H1 (cell line): ENCODE measurements at regions of chr11 and their contacts with region 1.

Region 1: GRCh38 chr11:121464352-121464946 is 11.7 kb upstream of the SORL1-AS1 start:
- DNase-seq: no peak
- H3K4me3 ChIP-seq: no peak overlapping the region
- H3K27ac ChIP-seq: 0 out of 2 replicates have a peak overlapping the region, but pooled peaks have one; percentile 1
- H3K4me1 ChIP-seq: peaks cover 21 to 37% (median 28%) of the 10 kb centered on the region in 4 experiments
- H3K27me3 ChIP-seq: no peaks in the 10 kb centered on the region
- CTCF ChIP-seq: no peak
- EP300 ChIP-seq: no peak
- POLR2A ChIP-seq: no peak
- RAD21 ChIP-seq: no peak

Region 2: GRCh38 chr11:121451986-121452608 is 12.4 kb before region 1 on chr11 and contains the start of gene SORL1:
- CTCF ChIA-PET with region 1: interaction called, 11 read pairs
- POLR2A ChIA-PET with region 1: interaction called, 16 read pairs
- DNase-seq: peak; percentile 44 to 90
- H3K4me3 ChIP-seq: peak within 1 kb of the TSS; percentile 78 to 97 (median 90)
- H3K27ac ChIP-seq: peak within 1 kb of the TSS; percentile 81
- H3K4me1 ChIP-seq: peaks cover 9 to 24% (median 10%) of the 10 kb centered on the region in 4 experiments
- H3K27me3 ChIP-seq: peaks cover 0 to 3% (median 1%) of the 10 kb centered on the region in 4 experiments; a peak in 4 of 7 replicates
- CTCF ChIP-seq: peak; percentile 74 to 94 (median 76)
- EP300 ChIP-seq: 0 out of 3 replicates have a peak, but pooled peaks of 1 of the 2 experiments have one; percentile 33
- POLR2A ChIP-seq: peak in 1 of 2 experiments; percentile 74; a peak in 2 of 3 replicates
- RAD21 ChIP-seq: peak; percentile 37 to 70; a peak in 3 of 4 replicates
- total RNA-seq, gene SORL1: 65.5 and 66.6 TPM in 2 replicates

Region 3: GRCh38 chr11:121479698-121480238 is 15.3 kb after region 1 on chr11:
- CTCF ChIA-PET with region 1: interaction called, 11 read pairs
- POLR2A ChIA-PET with region 1: interaction called, 3 read pairs
- DNase-seq: no peak
- H3K4me3 ChIP-seq: peak overlapping the region in 1 of 4 experiments; percentile 43; a peak in 2 of 8 replicates
- H3K27ac ChIP-seq: no peak overlapping the region; the same call in 1 of the 2 replicates
- H3K4me1 ChIP-seq: peaks cover 16 to 34% (median 27%) of the 10 kb centered on the region in 4 experiments
- H3K27me3 ChIP-seq: no peaks in the 10 kb centered on the region
- CTCF ChIP-seq: no peak
- EP300 ChIP-seq: no peak
- POLR2A ChIP-seq: no peak
- RAD21 ChIP-seq: 0 out of 4 replicates have a peak, but pooled peaks of 1 of the 2 experiments have one; percentile 15

Region 4: DNA sequence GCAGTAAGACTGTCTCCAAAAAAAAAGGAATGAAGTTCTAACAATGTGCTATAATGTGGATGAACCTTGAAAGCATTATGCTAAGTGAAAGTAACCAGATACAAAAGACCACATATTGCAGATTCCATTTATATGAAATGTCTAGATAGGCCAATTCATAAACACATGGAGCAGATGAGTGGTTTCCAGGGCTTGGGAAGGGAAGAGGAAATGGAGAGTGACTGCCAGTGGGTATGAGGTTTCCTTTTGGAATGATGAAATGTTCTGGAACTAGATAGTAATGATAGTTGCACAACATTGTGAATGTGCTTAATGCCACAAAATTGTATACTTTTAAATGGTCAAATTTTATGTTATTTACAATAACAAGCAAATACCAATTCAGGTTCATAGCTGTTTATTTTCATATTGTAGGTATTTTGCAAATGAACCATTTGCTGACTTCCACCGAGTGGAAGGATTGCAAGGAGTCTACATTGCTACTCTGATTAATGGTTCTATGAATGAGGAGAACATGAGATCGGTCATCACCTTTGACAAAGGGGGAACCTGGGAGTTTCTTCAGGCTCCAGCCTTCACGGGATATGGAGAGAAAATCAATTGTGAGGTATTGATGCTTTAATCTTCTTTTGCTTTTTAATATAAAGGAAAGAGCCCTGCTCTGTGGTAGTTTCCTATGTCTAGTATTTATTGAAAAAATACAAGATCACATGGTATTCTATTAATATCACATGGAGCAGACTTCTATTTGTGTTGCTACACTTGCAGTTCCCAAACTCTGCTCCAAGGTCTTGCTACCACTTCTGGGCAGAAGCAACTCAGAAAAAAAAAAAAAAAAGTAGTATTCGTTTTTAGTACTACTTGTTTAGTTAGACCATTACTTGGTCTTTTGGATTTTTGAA is 56.0 kb after region 1 on chr11:
- CTCF ChIA-PET with region 1: no interaction called
- POLR2A ChIA-PET with region 1: no interaction called
- DNase-seq: no peak
- H3K4me3 ChIP-seq: no peak overlapping the region
- H3K27ac ChIP-seq: no peak overlapping the region
- H3K4me1 ChIP-seq: no peaks in the 10 kb centered on the region; a peak in 1 of 7 replicates
- H3K27me3 ChIP-seq: no peaks in the 10 kb centered on the region
- CTCF ChIP-seq: no peak
- EP300 ChIP-seq: no peak
- POLR2A ChIP-seq: no peak
- RAD21 ChIP-seq: no peak